Naive thymus-derived CD4-positive, alpha-beta T cell (primary cell): ENCODE measurements at regions of chr10 and their contacts with region 1.

Region 1: DNA sequence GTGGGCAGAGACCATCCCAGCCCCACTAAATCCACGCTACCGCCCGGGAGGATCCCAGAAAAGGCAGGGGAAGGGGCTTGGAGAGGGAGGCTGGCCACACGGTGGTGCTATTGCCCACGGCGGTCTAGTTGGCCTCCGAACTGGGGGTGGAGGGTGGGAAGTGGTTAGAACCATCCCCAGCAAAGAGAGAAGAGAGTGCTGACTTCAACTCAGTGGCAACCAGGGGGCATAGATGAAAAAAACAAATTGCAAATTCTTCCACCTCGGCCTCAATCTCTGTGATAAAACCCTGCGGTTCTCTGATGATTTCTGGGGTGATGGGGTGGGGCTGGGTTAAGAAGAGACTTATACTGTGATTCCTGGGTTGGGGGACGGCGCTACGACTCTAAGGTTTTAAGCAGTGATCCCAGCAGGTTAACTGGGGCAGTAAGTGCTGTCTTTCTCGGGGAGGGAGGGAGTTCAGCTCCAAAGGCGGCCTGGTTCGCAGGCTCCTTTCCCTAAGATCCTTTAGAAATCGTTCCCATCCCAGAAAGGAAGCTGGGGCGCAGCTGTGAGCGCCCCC is 154.5 kb upstream of the LYZL2 start:
- DNase-seq: peak; percentile 65 to 89 (median 84)
- ATAC-seq: peak; percentile 96
- H3K4me3 ChIP-seq: peak overlapping the region; percentile 64
- H3K4me3 Mint-ChIP-seq: peak overlapping the region; percentile 80 to 92 (median 88)
- H3K27ac ChIP-seq: peak overlapping the region; percentile 64
- H3K27ac Mint-ChIP-seq: peak overlapping the region; percentile 69 to 96 (median 81)
- H3K4me1 ChIP-seq: peaks cover 0 to 16% of the 10 kb centered on the region in 2 donors
- H3K4me1 Mint-ChIP-seq: peaks cover 5 to 30% (median 25%) of the 10 kb centered on the region in 7 donors
- H3K27me3 ChIP-seq: no peaks in the 10 kb centered on the region
- H3K27me3 Mint-ChIP-seq: peaks cover 0 to 2% (median 0%) of the 10 kb centered on the region in 5 donors

Region 2: GRCh38 chr10:30687698-30688219 is 96.3 kb before region 1 on chr10:
- CTCF ChIA-PET with region 1: interaction called, 5 read pairs
- POLR2A ChIA-PET with region 1: no interaction called
- intact Hi-C with region 1: loop called (anchors 5 kb)
- DNase-seq: peak; percentile 53 to 80 (median 67)
- ATAC-seq: peak; percentile 84
- H3K4me3 ChIP-seq: no peak overlapping the region
- H3K4me3 Mint-ChIP-seq: no peak overlapping the region
- H3K27ac ChIP-seq: no peak overlapping the region
- H3K27ac Mint-ChIP-seq: peak overlapping the region in 1 of 9 donors; percentile 47
- H3K4me1 ChIP-seq: no peaks in the 10 kb centered on the region
- H3K4me1 Mint-ChIP-seq: peaks cover 0 to 39% (median 2%) of the 10 kb centered on the region in 7 donors
- H3K27me3 ChIP-seq: no peaks in the 10 kb centered on the region
- H3K27me3 Mint-ChIP-seq: peaks cover 11 to 38% (median 28%) of the 10 kb centered on the region in 5 donors

Region 3: GRCh38 chr10:30846710-30847109 is 62.7 kb after region 1 on chr10:
- CTCF ChIA-PET with region 1: interaction called, 14 read pairs
- POLR2A ChIA-PET with region 1: interaction called, 9 read pairs
- intact Hi-C with region 1: loop called in 1 of 2 experiments (anchors 1 kb)
- DNase-seq: no peak
- ATAC-seq: no peak
- H3K4me3 ChIP-seq: no peak overlapping the region
- H3K4me3 Mint-ChIP-seq: no peak overlapping the region
- H3K27ac ChIP-seq: no peak overlapping the region
- H3K27ac Mint-ChIP-seq: no peak overlapping the region
- H3K4me1 ChIP-seq: no peaks in the 10 kb centered on the region
- H3K4me1 Mint-ChIP-seq: peaks cover 1 to 14% (median 11%) of the 10 kb centered on the region in 7 donors
- H3K27me3 ChIP-seq: no peaks in the 10 kb centered on the region
- H3K27me3 Mint-ChIP-seq: no peaks in the 10 kb centered on the region

Region 4: GRCh38 chr10:30883751-30884150 is 99.7 kb after region 1 on chr10:
- CTCF ChIA-PET with region 1: no interaction called
- POLR2A ChIA-PET with region 1: no interaction called
- intact Hi-C with region 1: no loop called
- DNase-seq: no peak
- ATAC-seq: no peak
- H3K4me3 ChIP-seq: no peak overlapping the region
- H3K4me3 Mint-ChIP-seq: no peak overlapping the region
- H3K27ac ChIP-seq: no peak overlapping the region
- H3K27ac Mint-ChIP-seq: peak overlapping the region in 1 of 9 donors; percentile 14
- H3K4me1 ChIP-seq: no peaks in the 10 kb centered on the region
- H3K4me1 Mint-ChIP-seq: peaks cover 0 to 2% (median 0%) of the 10 kb centered on the region in 7 donors
- H3K27me3 ChIP-seq: no peaks in the 10 kb centered on the region
- H3K27me3 Mint-ChIP-seq: no peaks in the 10 kb centered on the region

Region 5: DNA sequence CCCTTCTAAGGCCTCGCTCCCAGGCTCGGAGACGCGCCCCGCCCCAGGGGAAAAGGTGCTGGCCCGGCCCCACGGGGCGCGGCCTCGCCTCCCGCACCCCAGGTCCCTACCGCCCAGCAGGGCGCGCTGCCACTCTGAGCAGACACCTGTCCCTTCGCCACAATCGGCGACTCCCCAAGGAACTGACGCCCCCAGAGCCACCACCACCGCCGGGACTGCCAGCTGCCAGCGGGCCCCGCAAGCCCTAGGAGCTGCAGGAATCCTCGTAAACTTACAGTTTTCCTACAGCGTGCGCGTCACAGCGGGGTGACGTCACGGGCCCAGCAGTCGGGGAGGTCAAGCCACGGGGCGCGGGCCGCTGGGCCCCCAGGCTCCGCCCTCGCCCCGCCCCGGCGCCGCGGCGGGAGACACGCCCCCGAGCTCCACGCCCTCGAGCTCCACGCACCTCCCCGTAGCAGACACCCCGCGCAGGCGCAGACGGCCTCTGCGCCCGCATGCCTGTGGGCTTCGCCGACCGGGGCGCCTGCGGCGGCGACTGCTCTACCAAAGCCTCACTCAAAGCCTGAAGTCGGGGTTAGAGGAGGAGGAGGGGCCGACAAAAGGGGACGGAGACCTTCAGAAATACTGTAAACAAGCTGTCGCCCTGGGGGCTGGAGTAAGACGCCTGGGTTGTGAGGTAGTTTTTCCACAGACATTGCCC is 247.7 kb after region 1 on chr10 and contains the start of gene ZNF438:
- CTCF ChIA-PET with region 1: interaction called, 21 read pairs
- POLR2A ChIA-PET with region 1: interaction called, 41 read pairs
- intact Hi-C with region 1: loop called (anchors 1 kb)
- DNase-seq: peak; percentile 93 to 99 (median 96)
- ATAC-seq: peak; percentile 92
- H3K4me3 ChIP-seq: peak within 1 kb of the TSS; percentile 84
- H3K4me3 Mint-ChIP-seq: peak within 1 kb of the TSS; percentile 89 to 94 (median 92)
- H3K27ac ChIP-seq: peak within 1 kb of the TSS; percentile 96
- H3K27ac Mint-ChIP-seq: peak within 1 kb of the TSS; percentile 93 to 99 (median 99)
- H3K4me1 ChIP-seq: peaks cover 5% of the 10 kb centered on the region in 2 donors
- H3K4me1 Mint-ChIP-seq: peaks cover 7 to 34% (median 14%) of the 10 kb centered on the region in 7 donors
- H3K27me3 ChIP-seq: no peaks in the 10 kb centered on the region
- H3K27me3 Mint-ChIP-seq: no peaks in the 10 kb centered on the region
- total RNA-seq, gene ZNF438: 3.9 to 5.8 (median 4.0) TPM

Region 6: DNA sequence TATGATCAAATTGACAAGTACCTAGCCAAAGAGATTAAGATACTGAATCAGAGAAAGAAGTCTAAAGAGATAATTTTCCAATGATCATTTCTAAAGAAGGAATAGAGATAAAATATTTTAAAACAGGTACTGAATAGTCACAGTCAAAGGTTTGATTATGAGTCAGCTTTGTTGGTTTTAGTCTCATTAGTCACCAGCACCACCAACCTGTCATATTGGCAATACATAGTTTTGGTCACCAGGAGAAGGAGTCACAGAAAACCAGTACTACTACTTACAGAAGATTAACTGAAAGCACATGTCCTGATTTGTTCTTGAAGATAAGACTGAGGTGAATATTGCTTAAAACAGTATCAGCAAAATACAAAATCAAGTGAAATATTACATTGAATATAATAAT is 569.6 kb after region 1 on chr10:
- CTCF ChIA-PET with region 1: no interaction called
- POLR2A ChIA-PET with region 1: no interaction called
- intact Hi-C with region 1: loop called in 1 of 2 experiments (anchors 1 kb)
- DNase-seq: peak in 2 of 9 donors; percentile 21 to 41
- ATAC-seq: peak; percentile 73
- H3K4me3 ChIP-seq: no peak overlapping the region
- H3K4me3 Mint-ChIP-seq: peak overlapping the region in 1 of 10 donors; percentile 8
- H3K27ac ChIP-seq: no peak overlapping the region
- H3K27ac Mint-ChIP-seq: no peak overlapping the region
- H3K4me1 ChIP-seq: peaks cover 4 to 12% of the 10 kb centered on the region in 2 donors
- H3K4me1 Mint-ChIP-seq: peaks cover 35 to 88% (median 76%) of the 10 kb centered on the region in 7 donors
- H3K27me3 ChIP-seq: no peaks in the 10 kb centered on the region
- H3K27me3 Mint-ChIP-seq: no peaks in the 10 kb centered on the region

Region 7: GRCh38 chr10:31770307-31770902 is 986.4 kb after region 1 on chr10:
- CTCF ChIA-PET with region 1: interaction called, 14 read pairs
- POLR2A ChIA-PET with region 1: no interaction called
- intact Hi-C with region 1: loop called (anchors 1 kb)
- DNase-seq: peak; percentile 27 to 69 (median 57)
- ATAC-seq: peak; percentile 92
- H3K4me3 ChIP-seq: no peak overlapping the region
- H3K4me3 Mint-ChIP-seq: no peak overlapping the region
- H3K27ac ChIP-seq: no peak overlapping the region
- H3K27ac Mint-ChIP-seq: no peak overlapping the region
- H3K4me1 ChIP-seq: no peaks in the 10 kb centered on the region
- H3K4me1 Mint-ChIP-seq: no peaks in the 10 kb centered on the region
- H3K27me3 ChIP-seq: no peaks in the 10 kb centered on the region
- H3K27me3 Mint-ChIP-seq: no peaks in the 10 kb centered on the region